ENCODE measurements at regions of chr12 and their contacts with region 1.

Region 1: DNA sequence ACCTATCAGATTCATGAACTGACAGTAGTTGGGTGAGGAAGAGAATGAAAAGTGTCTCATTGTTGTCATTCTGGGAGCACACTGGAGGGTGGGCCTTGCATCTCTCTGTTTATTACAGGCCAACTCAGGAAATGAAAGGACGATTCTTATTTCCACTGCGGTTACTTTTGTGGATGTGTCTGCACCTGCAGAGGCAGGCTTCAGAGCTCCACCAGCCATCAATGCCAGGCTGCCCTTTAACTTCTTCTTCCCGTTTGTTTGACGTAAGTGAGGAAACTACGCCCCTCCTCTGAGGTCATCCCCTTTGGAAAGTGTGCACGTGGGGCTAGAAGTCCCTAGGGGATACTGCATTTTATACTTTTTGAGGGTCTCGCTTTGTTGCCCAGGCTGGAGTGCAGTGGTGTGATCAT is 33.7 kb downstream of the TCTN1 start:
- DNase-seq: no peak
- ATAC-seq: no peak

Region 2: GRCh38 chr12:109739747-109740693 is 907.6 kb before region 1 on chr12:
- intact Hi-C with region 1: no loop called
- DNase-seq: peak; percentile 37
- ATAC-seq: no peak

Region 3: GRCh38 chr12:110627500-110628195 is 20.0 kb before region 1 on chr12:
- intact Hi-C with region 1: no loop called
- DNase-seq: no peak
- ATAC-seq: no peak

Region 4: DNA sequence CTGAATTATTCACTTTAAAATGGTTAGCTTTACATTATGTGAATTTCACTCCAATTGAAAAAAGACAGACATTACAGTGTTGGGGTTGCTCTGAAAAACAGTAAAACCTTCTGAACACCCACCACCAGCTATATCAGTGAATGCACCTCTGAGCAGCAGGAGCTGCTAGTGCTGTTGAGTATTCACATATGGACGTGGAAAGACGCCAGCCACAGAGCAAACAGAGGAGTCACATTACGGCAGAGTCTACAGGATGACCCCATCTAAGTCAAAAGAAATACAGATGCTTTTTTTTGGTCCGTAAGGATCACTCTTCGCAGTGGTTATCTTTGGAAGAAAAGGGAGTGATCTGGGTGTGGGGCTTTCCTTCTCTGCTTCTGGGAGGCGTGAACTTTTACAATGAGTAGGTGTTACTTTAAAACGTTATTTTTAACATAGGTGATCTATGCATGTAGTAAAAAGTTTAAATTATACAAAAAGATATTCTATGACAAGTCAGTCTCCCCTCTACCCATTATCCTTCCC is 36.7 kb after region 1 on chr12:
- intact Hi-C with region 1: loop called (anchors 5 kb)
- DNase-seq: no peak
- ATAC-seq: no peak

Region 5: GRCh38 chr12:110790301-110790700 is 142.7 kb after region 1 on chr12:
- intact Hi-C with region 1: no loop called
- DNase-seq: no peak
- ATAC-seq: peak; percentile 65

Measured in Right ventricle myocardium inferior (tissue), 1 donor.